CD14-positive monocyte (primary cell): ENCODE measurements at regions of chr1 and their contacts with region 1.

Region 1: GRCh38 chr1:108034406-108034805 is 69.4 kb upstream of the VAV3 start:
- DNase-seq: no peak
- H3K4me3 ChIP-seq: no peak overlapping the region
- H3K4me3 Mint-ChIP-seq: no peak overlapping the region
- H3K27ac ChIP-seq: no peak overlapping the region
- H3K27ac Mint-ChIP-seq: no peak overlapping the region
- H3K4me1 ChIP-seq: peaks cover 8 to 10% of the 10 kb centered on the region in 2 donors
- H3K4me1 Mint-ChIP-seq: peaks cover 12% of the 10 kb centered on the region
- H3K27me3 ChIP-seq: no peaks in the 10 kb centered on the region
- H3K27me3 Mint-ChIP-seq: peaks cover 0 to 4% (median 2%) of the 10 kb centered on the region in 3 donors
- CTCF ChIP-seq: no peak

Region 2: GRCh38 chr1:107499139-107499744 is 535.2 kb before region 1 on chr1:
- intact Hi-C with region 1: no loop called
- DNase-seq: no peak
- H3K4me3 ChIP-seq: no peak overlapping the region
- H3K4me3 Mint-ChIP-seq: peak overlapping the region in 1 of 2 donors; percentile 56
- H3K27ac ChIP-seq: no peak overlapping the region
- H3K27ac Mint-ChIP-seq: no peak overlapping the region
- H3K4me1 ChIP-seq: peaks cover 0 to 5% of the 10 kb centered on the region in 2 donors
- H3K4me1 Mint-ChIP-seq: peaks cover 11% of the 10 kb centered on the region
- H3K27me3 ChIP-seq: no peaks in the 10 kb centered on the region
- H3K27me3 Mint-ChIP-seq: peaks cover 0 to 2% (median 0%) of the 10 kb centered on the region in 3 donors
- CTCF ChIP-seq: no peak

Region 3: DNA sequence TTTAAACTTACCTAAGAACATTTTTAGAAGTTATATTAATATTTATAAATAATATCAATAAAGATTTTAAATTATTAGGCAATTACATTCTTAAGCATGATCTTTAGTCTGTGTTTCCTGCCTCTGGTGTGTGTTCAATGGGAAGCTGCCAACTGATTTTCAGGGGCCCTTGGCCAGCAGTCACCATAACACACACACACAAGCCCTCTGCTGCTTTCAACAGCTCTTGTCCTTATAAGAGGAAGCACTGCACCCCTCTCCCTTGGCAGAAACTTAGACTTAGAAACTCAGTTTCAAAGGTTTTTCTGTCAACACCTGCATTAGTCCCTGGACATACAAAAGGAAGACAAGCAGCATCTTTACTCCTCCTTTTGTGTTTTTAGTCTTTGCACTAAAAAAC is 150.8 kb before region 1 on chr1:
- intact Hi-C with region 1: no loop called
- DNase-seq: no peak
- H3K4me3 ChIP-seq: no peak overlapping the region
- H3K4me3 Mint-ChIP-seq: no peak overlapping the region
- H3K27ac ChIP-seq: no peak overlapping the region
- H3K27ac Mint-ChIP-seq: no peak overlapping the region
- H3K4me1 ChIP-seq: peaks cover 11 to 18% of the 10 kb centered on the region in 2 donors
- H3K4me1 Mint-ChIP-seq: peaks cover 27% of the 10 kb centered on the region
- H3K27me3 ChIP-seq: no peaks in the 10 kb centered on the region
- H3K27me3 Mint-ChIP-seq: no peaks in the 10 kb centered on the region
- CTCF ChIP-seq: no peak

Region 4: GRCh38 chr1:107897438-107898345 is 136.7 kb before region 1 on chr1:
- intact Hi-C with region 1: no loop called
- DNase-seq: peak in 2 of 3 donors; percentile 36 to 37
- H3K4me3 ChIP-seq: peak overlapping the region; percentile 31 to 70 (median 50)
- H3K4me3 Mint-ChIP-seq: peak overlapping the region; percentile 69 to 92
- H3K27ac ChIP-seq: peak overlapping the region in 1 of 2 donors; percentile 73
- H3K27ac Mint-ChIP-seq: peak overlapping the region in 5 of 7 donors; percentile 62 to 87 (median 78)
- H3K4me1 ChIP-seq: peaks cover 22 to 28% of the 10 kb centered on the region in 2 donors
- H3K4me1 Mint-ChIP-seq: peaks cover 50% of the 10 kb centered on the region
- H3K27me3 ChIP-seq: no peaks in the 10 kb centered on the region
- H3K27me3 Mint-ChIP-seq: peaks cover 0 to 2% (median 0%) of the 10 kb centered on the region in 3 donors
- CTCF ChIP-seq: no peak

Region 5: DNA sequence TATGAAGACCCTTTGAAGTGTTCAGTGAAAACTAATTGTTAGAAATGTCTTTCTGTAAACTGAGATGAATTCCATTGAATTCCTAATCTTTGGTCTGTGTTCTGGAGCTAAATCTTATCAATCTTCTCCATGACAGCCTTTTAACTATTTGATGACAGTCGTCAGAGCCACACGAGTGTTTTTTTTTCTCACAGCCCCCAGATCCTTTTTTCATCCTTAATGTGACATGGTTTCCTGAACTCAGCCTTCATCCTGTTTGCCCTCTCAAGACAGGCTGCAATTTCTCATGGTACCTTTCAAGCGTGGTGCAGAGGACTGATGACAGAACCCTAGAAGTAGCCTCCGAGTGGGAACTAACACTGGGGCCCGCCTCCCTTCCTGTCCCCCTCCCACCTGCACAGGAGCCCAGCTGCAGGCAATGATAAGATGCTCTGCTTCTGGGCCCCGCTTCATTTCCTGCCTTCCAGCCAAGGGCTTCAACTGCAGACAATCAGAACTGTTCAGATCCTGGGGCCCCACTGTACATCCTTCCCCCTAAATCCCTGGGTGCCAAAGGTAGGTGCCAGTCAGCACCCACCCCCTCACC is 45.1 kb after region 1 on chr1:
- intact Hi-C with region 1: loop called in 1 of 2 experiments (anchors 10 kb)
- DNase-seq: no peak
- H3K4me3 ChIP-seq: no peak overlapping the region
- H3K4me3 Mint-ChIP-seq: no peak overlapping the region
- H3K27ac ChIP-seq: no peak overlapping the region
- H3K27ac Mint-ChIP-seq: peak overlapping the region in 3 of 7 donors; percentile 14 to 51 (median 34)
- H3K4me1 ChIP-seq: peaks cover 31 to 37% of the 10 kb centered on the region in 2 donors
- H3K4me1 Mint-ChIP-seq: peaks cover 52% of the 10 kb centered on the region
- H3K27me3 ChIP-seq: no peaks in the 10 kb centered on the region
- H3K27me3 Mint-ChIP-seq: no peaks in the 10 kb centered on the region
- CTCF ChIP-seq: no peak

Region 6: DNA sequence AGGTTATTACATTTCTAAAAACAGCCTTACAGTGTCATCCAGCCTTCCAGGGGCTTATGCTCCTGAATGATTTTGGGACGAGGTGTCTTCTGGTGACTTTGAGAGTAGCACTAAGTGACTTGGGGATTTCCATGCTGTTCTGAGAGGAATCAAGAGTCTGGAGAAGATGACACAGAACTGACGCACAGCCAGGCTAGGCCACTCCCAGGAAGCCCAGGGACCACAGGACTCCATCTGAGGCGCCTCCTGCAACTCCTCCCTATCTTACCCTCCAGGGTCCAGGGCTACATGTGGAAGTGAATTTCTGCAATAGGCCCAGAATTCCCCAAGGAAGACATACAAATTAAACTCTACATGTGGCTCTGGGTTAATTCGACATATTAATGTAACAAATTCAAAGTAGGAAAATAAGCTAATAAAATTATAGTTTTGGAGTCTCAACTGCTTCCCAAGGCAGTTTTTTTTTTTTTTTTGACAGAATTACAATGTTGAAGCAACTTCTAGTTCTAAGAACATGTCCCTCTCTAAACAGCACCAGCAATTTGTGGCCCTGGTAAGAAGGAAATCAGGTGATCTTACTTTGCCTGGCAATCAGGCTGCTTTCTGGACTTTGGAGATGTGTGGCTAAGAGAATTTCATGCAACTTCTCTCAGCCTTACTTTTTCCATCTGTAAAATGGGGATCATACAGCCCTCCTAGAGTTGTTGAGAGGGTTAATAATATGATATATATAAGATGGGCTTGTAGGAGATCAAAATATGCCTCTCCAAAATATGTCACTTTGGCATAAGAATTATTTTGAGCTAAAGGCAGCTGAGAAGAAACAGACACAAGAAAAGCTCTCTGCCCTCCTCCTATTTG is 73.5 kb after region 1 on chr1:
- intact Hi-C with region 1: no loop called
- DNase-seq: peak; percentile 52 to 86 (median 55)
- H3K4me3 ChIP-seq: no peak overlapping the region
- H3K4me3 Mint-ChIP-seq: no peak overlapping the region
- H3K27ac ChIP-seq: no peak overlapping the region
- H3K27ac Mint-ChIP-seq: peak overlapping the region in 4 of 7 donors; percentile 13 to 50 (median 33)
- H3K4me1 ChIP-seq: peaks cover 4 to 6% of the 10 kb centered on the region in 2 donors
- H3K4me1 Mint-ChIP-seq: peaks cover 7% of the 10 kb centered on the region
- H3K27me3 ChIP-seq: no peaks in the 10 kb centered on the region
- H3K27me3 Mint-ChIP-seq: peaks cover 0 to 2% (median 0%) of the 10 kb centered on the region in 3 donors
- CTCF ChIP-seq: no peak